Head of caudate nucleus (tissue), 42 donors: ENCODE measurements at regions of chr4 and their contacts with region 1.

Region 1: DNA sequence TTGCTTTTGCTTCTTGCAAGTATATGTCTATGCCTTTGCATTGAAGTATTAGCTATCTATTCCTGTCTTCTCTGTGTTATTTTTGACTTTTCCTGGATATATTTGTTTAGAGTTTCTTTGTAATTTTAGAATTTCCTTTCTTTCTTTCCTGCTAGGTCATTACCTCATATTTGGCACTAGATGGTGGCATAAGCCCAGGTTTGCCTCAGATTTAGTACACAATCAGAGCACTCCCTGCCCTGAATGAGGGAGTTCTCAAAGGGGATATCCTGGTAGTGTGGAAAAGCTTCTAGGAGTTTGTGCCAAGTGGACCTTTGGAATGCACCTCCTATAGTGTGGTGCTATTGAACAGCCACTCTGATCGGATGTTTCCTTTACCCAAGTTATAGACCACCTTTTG is 181.6 kb downstream of the UGT8 start:
- DNase-seq: peak in 21 of 42 donors; percentile 10 to 61 (median 31)

Region 2: GRCh38 chr4:114694770-114695169 is 85.4 kb before region 1 on chr4:
- intact Hi-C with region 1: no loop called
- DNase-seq: peak in 1 of 42 donors; percentile 37

Region 3: DNA sequence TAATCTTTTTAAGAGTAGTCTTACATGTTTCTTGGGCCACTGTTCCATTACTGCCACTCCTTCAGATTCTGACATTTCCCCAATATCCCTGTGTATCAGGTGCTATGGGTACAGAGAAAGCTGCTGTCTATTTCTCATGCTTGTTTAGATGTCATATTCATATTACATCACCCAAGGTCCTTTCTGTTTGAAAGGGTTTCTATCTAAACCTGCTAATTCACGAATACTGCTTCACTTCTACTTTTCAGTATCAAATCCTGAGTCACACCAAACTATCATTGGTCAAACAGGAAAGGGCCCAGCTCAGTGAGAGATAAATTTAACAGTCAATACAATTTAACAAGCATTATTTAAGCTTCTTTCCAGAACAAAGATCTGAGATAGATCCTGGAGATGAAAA is 59.8 kb after region 1 on chr4:
- intact Hi-C with region 1: no loop called
- DNase-seq: no peak

Region 4: GRCh38 chr4:115851918-115852766 is 1071.9 kb after region 1 on chr4:
- intact Hi-C with region 1: loop called (anchors 10 kb)
- DNase-seq: peak in 35 of 42 donors; percentile 9 to 75 (median 32)